Keratinocyte (primary cell): ENCODE measurements at regions of chr1 and their contacts with region 1.

Region 1: DNA sequence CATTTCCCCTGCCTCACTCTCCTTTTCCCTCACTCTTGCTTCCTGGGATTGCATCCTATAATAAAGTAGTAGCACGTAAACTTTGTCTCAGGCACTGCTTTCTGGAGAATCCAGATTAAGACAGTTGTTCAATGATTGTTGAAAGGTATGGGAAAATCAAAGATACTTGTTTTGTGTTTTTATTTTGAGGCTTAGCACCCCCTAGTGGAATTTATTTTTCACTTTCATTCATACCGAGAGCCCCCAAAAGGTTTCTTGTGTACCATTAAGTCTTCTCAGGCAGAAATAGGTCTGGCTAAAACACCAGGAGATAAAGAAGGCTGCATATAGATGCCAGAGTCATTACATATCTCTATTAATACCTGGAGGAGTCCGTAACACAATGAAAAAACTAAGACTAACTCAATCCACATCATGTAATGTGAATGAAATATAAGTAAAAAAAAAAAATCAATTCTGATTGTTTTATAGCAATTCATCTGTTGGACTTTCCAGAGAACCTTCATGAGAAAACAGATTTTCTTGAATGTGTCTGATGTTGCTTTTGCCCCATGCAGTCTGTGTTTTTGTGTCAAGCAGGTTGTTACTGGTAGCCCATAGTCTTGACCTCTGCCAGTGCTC is 103.5 kb downstream of the RPE65 start:
- DNase-seq: no peak
- H3K4me3 ChIP-seq: no peak overlapping the region
- H3K27ac ChIP-seq: no peak overlapping the region
- H3K4me1 ChIP-seq: no peaks in the 10 kb centered on the region
- H3K27me3 ChIP-seq: no peaks in the 10 kb centered on the region
- CTCF ChIP-seq: peak in 1 of 3 experiments; percentile 36

Region 2: GRCh38 chr1:68128157-68128556 is 218.1 kb before region 1 on chr1:
- dilution Hi-C with region 1: loop called (anchors 25 kb)
- DNase-seq: no peak
- H3K4me3 ChIP-seq: no peak overlapping the region
- H3K27ac ChIP-seq: no peak overlapping the region
- H3K4me1 ChIP-seq: peaks cover 2% of the 10 kb centered on the region
- H3K27me3 ChIP-seq: no peaks in the 10 kb centered on the region
- CTCF ChIP-seq: no peak